Activated CD4-positive, alpha-beta T cell treated with anti-CD3 and anti-CD28 coated beads for 36 hours (primary cell): ENCODE measurements at regions of chr19 and their contacts with region 1.

Region 1: GRCh38 chr19:51703575-51704515 is 10.7 kb downstream of the SPACA6 start:
- DNase-seq: peak; percentile 98
- ATAC-seq: peak; percentile 88
- H3K4me3 Mint-ChIP-seq: peak overlapping the region; percentile 94
- H3K27ac Mint-ChIP-seq: peak overlapping the region; percentile 95
- H3K4me1 Mint-ChIP-seq: peaks cover 33% of the 10 kb centered on the region
- H3K27me3 Mint-ChIP-seq: peaks cover 5% of the 10 kb centered on the region

Region 2: GRCh38 chr19:51047031-51047335 is 656.9 kb before region 1 on chr19:
- CTCF ChIA-PET with region 1: no interaction called
- POLR2A ChIA-PET with region 1: no interaction called
- intact Hi-C with region 1: no loop called
- DNase-seq: no peak
- ATAC-seq: no peak
- H3K4me3 Mint-ChIP-seq: no peak overlapping the region
- H3K27ac Mint-ChIP-seq: no peak overlapping the region
- H3K4me1 Mint-ChIP-seq: no peaks in the 10 kb centered on the region
- H3K27me3 Mint-ChIP-seq: peaks cover 13% of the 10 kb centered on the region

Region 3: DNA sequence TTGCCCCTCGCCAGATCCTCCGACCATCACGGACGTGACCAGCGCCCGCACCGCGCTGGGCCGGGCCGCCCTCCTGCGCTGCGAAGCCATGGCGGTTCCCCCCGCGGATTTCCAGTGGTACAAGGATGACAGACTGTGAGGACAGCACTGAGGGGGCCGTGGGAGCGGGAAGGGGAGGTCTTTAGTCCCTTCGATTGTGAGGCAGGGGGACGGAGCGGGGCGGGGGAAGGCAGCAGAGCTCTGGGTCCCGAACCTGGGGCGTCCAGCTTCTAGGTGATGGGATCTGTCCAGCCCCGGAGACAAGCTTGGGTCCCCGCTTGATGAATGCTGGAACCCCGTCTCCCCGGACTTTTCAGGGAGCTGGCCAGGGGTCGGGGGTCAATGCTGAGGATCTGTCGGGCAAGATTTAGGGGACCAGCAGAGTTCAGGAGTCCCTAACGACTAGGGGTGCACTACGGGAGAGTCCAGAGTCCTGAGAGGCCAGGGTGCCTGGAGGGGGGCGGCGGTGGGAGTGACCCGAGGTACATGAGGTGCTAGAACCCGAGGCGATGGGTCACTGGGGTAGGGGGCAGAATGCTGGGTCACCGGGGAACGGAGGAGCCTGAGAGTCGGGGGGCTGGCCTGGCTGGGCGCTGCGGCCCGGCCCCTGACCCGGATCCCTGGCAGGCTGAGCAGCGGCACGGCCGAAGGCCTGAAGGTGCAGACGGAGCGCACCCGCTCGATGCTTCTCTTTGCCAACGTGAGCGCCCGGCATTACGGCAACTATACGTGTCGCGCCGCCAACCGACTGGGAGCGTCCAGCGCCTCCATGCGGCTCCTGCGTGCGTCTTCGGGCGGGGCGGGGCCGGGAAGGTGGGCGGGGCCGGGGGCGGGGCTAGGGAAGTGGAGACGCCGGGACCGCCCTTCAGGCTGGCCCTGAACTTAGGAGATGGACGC is 376.5 kb before region 1 on chr19:
- CTCF ChIA-PET with region 1: no interaction called
- POLR2A ChIA-PET with region 1: no interaction called
- intact Hi-C with region 1: loop called in 1 of 2 experiments (anchors 1 kb)
- DNase-seq: peak; percentile 87
- ATAC-seq: peak; percentile 93
- H3K4me3 Mint-ChIP-seq: peak overlapping the region; percentile 35
- H3K27ac Mint-ChIP-seq: no peak overlapping the region
- H3K4me1 Mint-ChIP-seq: peaks cover 8% of the 10 kb centered on the region
- H3K27me3 Mint-ChIP-seq: peaks cover 60% of the 10 kb centered on the region

Region 4: DNA sequence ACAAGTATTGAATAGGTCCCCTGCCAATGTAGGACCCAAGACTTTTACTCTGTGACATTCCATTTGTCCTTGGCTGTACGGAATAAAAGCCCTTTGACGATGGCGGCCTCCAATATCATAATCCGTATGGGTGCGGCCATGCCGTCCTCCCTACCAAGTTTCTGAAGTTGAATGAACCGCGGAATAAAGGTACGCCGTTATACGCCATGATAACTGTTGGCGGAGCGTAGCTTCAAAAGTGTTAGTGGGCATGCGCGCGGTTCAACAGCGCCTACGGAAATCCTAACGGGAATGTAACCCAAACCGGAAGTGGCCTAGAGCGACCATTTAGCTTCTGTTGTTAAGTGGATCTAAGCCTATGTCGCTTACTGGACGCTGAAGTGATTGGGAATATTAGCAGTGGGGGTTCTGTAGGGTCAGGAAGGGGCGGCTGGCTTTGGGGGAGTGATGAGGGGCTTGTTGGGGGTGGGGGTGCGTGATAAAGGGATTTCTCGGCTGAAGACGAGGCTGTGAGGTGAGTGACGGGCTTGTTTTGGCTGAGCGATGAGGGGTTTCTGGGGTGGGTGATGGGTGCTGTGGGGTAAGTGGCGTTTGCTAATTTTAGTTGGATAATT is 132.8 kb before region 1 on chr19 and contains the start of gene ZNF175:
- CTCF ChIA-PET with region 1: no interaction called
- POLR2A ChIA-PET with region 1: no interaction called
- intact Hi-C with region 1: loop called in 1 of 2 experiments (anchors 1 kb)
- DNase-seq: peak; percentile 91
- ATAC-seq: peak; percentile 96
- H3K4me3 Mint-ChIP-seq: peak within 1 kb of the TSS; percentile 91
- H3K27ac Mint-ChIP-seq: peak within 1 kb of the TSS; percentile 89
- H3K4me1 Mint-ChIP-seq: peaks cover 31% of the 10 kb centered on the region
- H3K27me3 Mint-ChIP-seq: peaks cover 2% of the 10 kb centered on the region
- total RNA-seq, gene ZNF175: 5.9 to 9.6 TPM

Region 5: DNA sequence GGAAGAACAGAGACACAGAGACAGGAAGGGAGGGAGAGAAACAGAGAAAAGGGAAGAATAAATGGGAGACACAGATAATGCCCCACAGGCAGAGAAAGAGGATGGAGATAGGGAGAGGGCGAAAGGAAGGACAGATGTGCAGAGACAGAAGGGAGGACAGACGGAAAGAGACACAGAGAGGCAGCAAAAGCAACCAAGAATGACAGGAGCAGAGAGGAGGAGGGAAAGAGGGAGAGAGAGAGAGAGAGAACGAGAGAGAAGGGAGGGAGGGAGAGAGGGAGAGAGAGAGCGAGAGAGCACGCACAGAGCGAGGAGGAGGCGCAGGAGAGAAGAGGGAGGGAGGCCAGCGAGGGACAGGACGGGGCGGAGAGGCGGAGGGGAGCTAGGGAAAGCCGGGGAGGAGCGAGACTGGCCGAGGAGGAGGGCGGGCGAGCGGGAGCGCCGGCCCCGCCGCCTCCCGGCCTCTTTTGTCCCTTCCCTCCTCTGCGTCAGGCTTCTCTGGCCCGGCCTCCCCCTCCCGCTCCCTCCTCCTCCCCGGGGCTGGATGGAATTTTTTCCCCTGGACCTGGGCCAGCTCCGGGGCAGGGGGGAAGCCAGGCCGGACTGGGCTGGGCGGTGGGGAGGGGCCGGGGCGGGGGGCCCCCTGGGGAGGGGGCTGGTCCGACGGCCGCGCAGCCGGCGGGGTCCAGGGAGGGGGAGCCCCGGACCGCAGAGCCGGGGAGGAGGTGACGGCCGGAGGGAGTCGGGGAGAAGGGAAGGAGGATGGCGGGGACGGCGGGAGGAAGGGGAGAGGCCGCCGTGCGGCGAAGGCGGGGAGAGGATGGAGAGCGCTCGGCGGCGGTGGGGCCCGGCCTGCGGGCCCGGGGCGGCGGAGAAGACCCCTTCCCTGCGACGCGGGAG is 14.9 kb before region 1 on chr19:
- CTCF ChIA-PET with region 1: interaction called, 4 read pairs
- POLR2A ChIA-PET with region 1: interaction called, 4 read pairs
- intact Hi-C with region 1: loop called (anchors 1 to 2 kb)
- DNase-seq: peak; percentile 50
- ATAC-seq: no peak
- H3K4me3 Mint-ChIP-seq: peak overlapping the region; percentile 90
- H3K27ac Mint-ChIP-seq: peak overlapping the region; percentile 49
- H3K4me1 Mint-ChIP-seq: peaks cover 15% of the 10 kb centered on the region
- H3K27me3 Mint-ChIP-seq: no peaks in the 10 kb centered on the region

Region 6: GRCh38 chr19:51926784-51927742 is 223.2 kb after region 1 on chr19 and contains the start of gene ZNF613:
- CTCF ChIA-PET with region 1: no interaction called
- POLR2A ChIA-PET with region 1: no interaction called
- intact Hi-C with region 1: loop called in 1 of 2 experiments (anchors 10 kb)
- DNase-seq: peak; percentile 91
- ATAC-seq: peak; percentile 95
- H3K4me3 Mint-ChIP-seq: peak within 1 kb of the TSS; percentile 95
- H3K27ac Mint-ChIP-seq: peak within 1 kb of the TSS; percentile 97
- H3K4me1 Mint-ChIP-seq: peaks cover 20% of the 10 kb centered on the region
- H3K27me3 Mint-ChIP-seq: no peaks in the 10 kb centered on the region
- total RNA-seq, gene ZNF613: 4.2 to 6.3 TPM

Region 7: GRCh38 chr19:52048555-52049501 is 345.0 kb after region 1 on chr19 and contains the start of gene ZNF432:
- CTCF ChIA-PET with region 1: no interaction called
- POLR2A ChIA-PET with region 1: no interaction called
- intact Hi-C with region 1: loop called in 1 of 2 experiments (anchors 5 kb)
- DNase-seq: peak; percentile 88
- ATAC-seq: peak; percentile 88
- H3K4me3 Mint-ChIP-seq: peak within 1 kb of the TSS; percentile 94
- H3K27ac Mint-ChIP-seq: peak within 1 kb of the TSS; percentile 100
- H3K4me1 Mint-ChIP-seq: peaks cover 16% of the 10 kb centered on the region
- H3K27me3 Mint-ChIP-seq: no peaks in the 10 kb centered on the region
- total RNA-seq, gene ZNF432: 11.5 to 12.8 TPM